Posterior vena cava (tissue), 2 donors: ENCODE measurements at regions of chr11 and their contacts with region 1.

Region 1: GRCh38 chr11:119023741-119024140 is 5.2 kb downstream of the TRAPPC4 start:
- DNase-seq: peak; percentile 32

Region 2: GRCh38 chr11:118547132-118547531 is 476.6 kb before region 1 on chr11:
- intact Hi-C with region 1: no loop called
- DNase-seq: no peak

Region 3: GRCh38 chr11:119062779-119063178 is 39.0 kb after region 1 on chr11:
- intact Hi-C with region 1: loop called in 1 of 2 experiments (anchors 5 kb)
- DNase-seq: no peak

Region 4: GRCh38 chr11:120324932-120325810 is 1301.4 kb after region 1 on chr11 and contains the start of gene TLCD5:
- intact Hi-C with region 1: no loop called
- DNase-seq: peak; percentile 89
- total RNA-seq, gene TLCD5: 4.9 to 6.0 TPM